ENCODE measurements at regions of chr16 and their contacts with region 1.

Region 1: DNA sequence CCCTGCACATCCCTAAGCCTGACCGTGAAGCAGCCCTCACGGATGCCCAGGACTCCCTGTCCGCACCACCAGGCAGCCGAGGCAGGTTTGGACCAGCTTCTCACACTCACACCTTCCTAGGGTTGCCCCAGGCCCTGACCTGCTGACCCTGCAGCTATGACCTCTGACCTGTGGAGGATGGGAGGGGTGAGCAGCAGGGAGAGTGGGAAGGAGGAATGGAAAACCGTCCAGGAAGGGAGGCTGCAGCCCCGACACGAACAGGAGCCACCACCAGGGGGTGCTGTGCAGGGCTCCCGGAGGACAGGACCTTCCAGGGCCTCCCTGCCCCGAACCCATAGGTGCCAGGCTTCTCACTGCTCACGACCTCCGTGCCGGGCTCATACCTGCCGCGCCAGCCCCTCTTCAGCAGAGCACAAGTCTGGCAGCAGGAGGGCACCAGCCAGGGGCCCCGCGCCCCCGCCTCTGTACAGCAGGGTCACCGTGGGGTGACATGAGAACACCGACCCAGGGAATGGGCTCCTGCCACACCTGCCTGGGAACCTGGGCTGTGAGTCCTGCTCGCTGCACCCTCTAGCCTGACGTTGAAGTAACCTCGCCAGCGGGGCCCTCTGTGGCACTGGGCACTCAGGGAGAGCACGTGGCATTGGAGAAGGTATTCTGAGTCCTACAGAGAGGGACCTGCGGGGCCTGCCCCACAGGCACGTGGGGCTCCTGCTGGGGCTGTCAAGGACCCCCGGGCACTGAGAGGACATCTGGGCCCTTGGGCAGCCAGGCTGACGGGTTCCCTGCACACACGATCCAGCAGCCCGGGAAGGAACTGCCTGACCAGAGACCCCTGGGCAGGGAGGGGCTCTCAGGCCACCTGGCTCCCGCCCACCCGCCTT is 37.6 kb downstream of the CTU2 start:
- DNase-seq: peak; percentile 67
- ATAC-seq: no peak
- H3K4me3 Mint-ChIP-seq: no peak overlapping the region
- H3K27ac Mint-ChIP-seq: no peak overlapping the region
- H3K4me1 Mint-ChIP-seq: peaks cover 55% of the 10 kb centered on the region
- H3K27me3 Mint-ChIP-seq: no peaks in the 10 kb centered on the region
- CTCF ChIP-seq: peak; percentile 89

Region 2: GRCh38 chr16:88727871-88728270 is 16.1 kb before region 1 on chr16:
- CTCF ChIA-PET with region 1: no interaction called
- POLR2A ChIA-PET with region 1: no interaction called
- intact Hi-C with region 1: no loop called
- DNase-seq: no peak
- ATAC-seq: no peak
- H3K4me3 Mint-ChIP-seq: no peak overlapping the region
- H3K27ac Mint-ChIP-seq: no peak overlapping the region
- H3K4me1 Mint-ChIP-seq: no peaks in the 10 kb centered on the region
- H3K27me3 Mint-ChIP-seq: no peaks in the 10 kb centered on the region
- CTCF ChIP-seq: no peak

Region 3: DNA sequence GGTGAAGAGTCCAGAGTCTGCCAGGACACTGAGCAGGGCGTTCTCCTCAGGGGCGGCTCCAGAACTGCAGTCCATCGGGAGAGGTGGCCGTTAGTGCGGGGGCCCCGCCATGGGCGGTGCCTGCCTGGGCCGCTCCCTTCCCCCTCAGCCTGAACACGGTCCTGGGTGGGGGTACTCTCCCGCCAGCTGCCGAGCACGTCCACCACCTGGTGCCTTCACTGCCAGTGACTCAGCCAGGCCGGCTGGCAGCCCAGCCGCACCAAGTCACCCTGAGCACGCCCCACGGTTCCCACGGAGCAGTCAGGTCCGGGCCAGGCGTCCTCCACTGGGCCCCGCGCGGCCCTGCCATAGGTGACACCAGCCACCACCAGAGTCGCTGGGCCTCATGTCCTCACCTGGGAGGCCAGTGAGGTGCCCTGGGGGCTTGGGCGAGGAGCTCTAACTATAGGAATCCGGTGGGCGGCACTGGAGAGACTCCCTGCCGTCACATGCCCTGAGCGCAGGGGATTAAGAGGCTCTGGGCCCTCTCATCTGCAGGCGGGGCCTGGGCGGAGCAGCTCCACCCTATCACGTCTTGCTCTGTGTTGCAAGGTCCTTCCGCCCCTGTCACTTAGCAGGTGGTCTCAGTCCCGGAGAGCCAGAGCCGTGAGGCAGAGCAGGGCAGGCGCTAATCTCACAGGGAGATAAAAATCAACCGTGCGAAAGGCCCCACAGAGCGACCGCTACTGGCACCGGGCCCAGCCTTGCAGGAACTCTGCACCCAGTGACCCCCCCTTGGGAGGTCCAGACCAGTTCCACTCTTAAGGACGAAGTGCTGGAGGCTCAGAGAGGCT is 26.7 kb after region 1 on chr16:
- CTCF ChIA-PET with region 1: interaction called, 4 read pairs
- POLR2A ChIA-PET with region 1: interaction called, 14 read pairs
- intact Hi-C with region 1: loop called (anchors 2 kb)
- DNase-seq: peak; percentile 43
- ATAC-seq: peak; percentile 54
- H3K4me3 Mint-ChIP-seq: peak overlapping the region; percentile 19
- H3K27ac Mint-ChIP-seq: peak overlapping the region; percentile 35
- H3K4me1 Mint-ChIP-seq: peaks cover 61% of the 10 kb centered on the region
- H3K27me3 Mint-ChIP-seq: no peaks in the 10 kb centered on the region
- CTCF ChIP-seq: no peak